ENCODE measurements at regions of chr10 and their contacts with region 1.

Region 1: GRCh38 chr10:62573929-62574328 is 199.8 kb downstream of the ZNF365 start:
- DNase-seq: no peak
- H3K4me3 ChIP-seq: no peak overlapping the region
- H3K27ac ChIP-seq: no peak overlapping the region
- H3K4me1 ChIP-seq: no peaks in the 10 kb centered on the region
- H3K27me3 ChIP-seq: no peaks in the 10 kb centered on the region
- CTCF ChIP-seq: no peak

Region 2: DNA sequence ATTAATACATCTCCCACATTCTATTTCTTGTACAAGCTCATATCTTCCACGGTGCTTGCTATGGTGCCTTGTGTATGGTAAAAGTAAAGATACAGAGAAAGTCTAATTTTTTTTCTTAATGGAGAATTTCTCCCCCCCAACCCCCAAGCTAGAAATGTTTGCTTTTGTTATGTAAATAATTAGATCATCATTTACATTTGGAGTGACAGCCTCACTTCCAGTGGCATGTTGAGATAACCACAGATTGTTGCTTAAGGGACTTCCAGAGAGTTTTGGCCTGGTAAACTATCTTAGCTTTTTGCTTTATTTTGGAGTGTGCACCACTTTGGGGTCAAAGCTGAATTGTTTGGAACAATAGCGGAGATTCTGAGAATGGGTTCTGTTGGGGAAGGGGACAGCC is 70.1 kb before region 1 on chr10:
- CTCF ChIA-PET with region 1: interaction called, 10 read pairs
- POLR2A ChIA-PET with region 1: no interaction called
- intact Hi-C with region 1: no loop called
- DNase-seq: no peak
- H3K4me3 ChIP-seq: no peak overlapping the region
- H3K27ac ChIP-seq: no peak overlapping the region
- H3K4me1 ChIP-seq: peaks cover 5% of the 10 kb centered on the region
- H3K27me3 ChIP-seq: no peaks in the 10 kb centered on the region
- CTCF ChIP-seq: no peak

Measured in A673 (cell line).